Natural killer cell (primary cell): ENCODE measurements at regions of chr1 and their contacts with region 1.

Region 1: GRCh38 chr1:202713110-202713509 is 2.9 kb upstream of the SYT2 start:
- DNase-seq: no peak
- ATAC-seq: no peak
- H3K4me3 ChIP-seq: no peak overlapping the region
- H3K4me3 Mint-ChIP-seq: no peak overlapping the region
- H3K27ac ChIP-seq: no peak overlapping the region
- H3K27ac Mint-ChIP-seq: no peak overlapping the region
- H3K4me1 ChIP-seq: peaks cover 7% of the 10 kb centered on the region
- H3K4me1 Mint-ChIP-seq: no peaks in the 10 kb centered on the region
- H3K27me3 ChIP-seq: peaks cover 17% of the 10 kb centered on the region
- H3K27me3 Mint-ChIP-seq: peaks cover 44 to 58% of the 10 kb centered on the region in 2 donors
- CTCF ChIP-seq: no peak

Region 2: GRCh38 chr1:202192770-202193613 is 520.1 kb before region 1 on chr1:
- intact Hi-C with region 1: loop called (anchors 2 kb)
- DNase-seq: peak; percentile 63 to 76
- ATAC-seq: peak in 2 of 3 donors; percentile 22 to 27
- H3K4me3 ChIP-seq: peak overlapping the region; percentile 10
- H3K4me3 Mint-ChIP-seq: peak overlapping the region; percentile 83
- H3K27ac ChIP-seq: no peak overlapping the region
- H3K27ac Mint-ChIP-seq: peak overlapping the region in 1 of 2 donors; percentile 48
- H3K4me1 ChIP-seq: peaks cover 46% of the 10 kb centered on the region
- H3K4me1 Mint-ChIP-seq: peaks cover 42 to 46% of the 10 kb centered on the region in 2 donors
- H3K27me3 ChIP-seq: peaks cover 13% of the 10 kb centered on the region
- H3K27me3 Mint-ChIP-seq: peaks cover 0 to 15% of the 10 kb centered on the region in 2 donors
- CTCF ChIP-seq: peak; percentile 90

Region 3: GRCh38 chr1:202348509-202349205 is 364.5 kb before region 1 on chr1 and contains the start of gene PPP1R12B:
- intact Hi-C with region 1: loop called (anchors 1 kb)
- DNase-seq: peak; percentile 90 to 97
- ATAC-seq: peak; percentile 96 to 99 (median 97)
- H3K4me3 ChIP-seq: peak within 1 kb of the TSS; percentile 98
- H3K4me3 Mint-ChIP-seq: peak within 1 kb of the TSS; percentile 99
- H3K27ac ChIP-seq: peak within 1 kb of the TSS; percentile 84
- H3K27ac Mint-ChIP-seq: peak within 1 kb of the TSS; percentile 92 to 96
- H3K4me1 ChIP-seq: peaks cover 10% of the 10 kb centered on the region
- H3K4me1 Mint-ChIP-seq: peaks cover 27 to 32% of the 10 kb centered on the region in 2 donors
- H3K27me3 ChIP-seq: no peaks in the 10 kb centered on the region
- H3K27me3 Mint-ChIP-seq: no peaks in the 10 kb centered on the region
- CTCF ChIP-seq: no peak
- total RNA-seq, gene PPP1R12B: 27.8 to 47.5 (median 46.5) TPM

Region 4: GRCh38 chr1:203127666-203128430 is 414.7 kb after region 1 on chr1 and contains the start of gene ADORA1:
- intact Hi-C with region 1: no loop called
- DNase-seq: no peak
- ATAC-seq: no peak
- H3K4me3 ChIP-seq: no peak within 1 kb of the TSS
- H3K4me3 Mint-ChIP-seq: no peak within 1 kb of the TSS
- H3K27ac ChIP-seq: no peak within 1 kb of the TSS
- H3K27ac Mint-ChIP-seq: no peak within 1 kb of the TSS
- H3K4me1 ChIP-seq: peaks cover 18% of the 10 kb centered on the region
- H3K4me1 Mint-ChIP-seq: peaks cover 0 to 8% of the 10 kb centered on the region in 2 donors
- H3K27me3 ChIP-seq: peaks cover 8% of the 10 kb centered on the region
- H3K27me3 Mint-ChIP-seq: peaks cover 52 to 54% of the 10 kb centered on the region in 2 donors
- CTCF ChIP-seq: no peak
- total RNA-seq, gene ADORA1: not detected